K562 (cell line): ENCODE measurements at regions of chr7 and their contacts with region 1.

Region 1: GRCh38 chr7:38107486-38107893 is 70.6 kb upstream of the STARD3NL start:
- DNase-seq: peak; percentile 61 to 80 (median 67)
- ATAC-seq: peak; percentile 96
- H3K4me3 ChIP-seq: no peak overlapping the region
- H3K27ac ChIP-seq: no peak overlapping the region
- H3K4me1 ChIP-seq: no peaks in the 10 kb centered on the region
- H3K27me3 ChIP-seq: no peaks in the 10 kb centered on the region; a peak in 1 of 5 replicates
- CTCF ChIP-seq: peak; percentile 71 to 84 (median 81)
- EP300 ChIP-seq: no peak
- POLR2A ChIP-seq: no peak
- RAD21 ChIP-seq: peak; percentile 87 to 95

Region 2: GRCh38 chr7:38178004-38178694 is 70.7 kb after region 1 on chr7 and contains the start of gene STARD3NL:
- CTCF ChIA-PET with region 1: no interaction called
- POLR2A ChIA-PET with region 1: no interaction called
- in situ Hi-C with region 1: no loop called
- intact Hi-C with region 1: loop called (anchors 2 kb)
- DNase-seq: peak; percentile 96 to 100 (median 97)
- ATAC-seq: peak; percentile 94
- H3K4me3 ChIP-seq: peak within 1 kb of the TSS; percentile 68
- H3K27ac ChIP-seq: peak within 1 kb of the TSS; percentile 76
- H3K4me1 ChIP-seq: peaks cover 7 to 26% of the 10 kb centered on the region in 2 experiments
- H3K27me3 ChIP-seq: no peaks in the 10 kb centered on the region
- CTCF ChIP-seq: 0 out of 6 replicates have a peak, but pooled peaks of 1 of the 3 experiments have one; percentile 22
- EP300 ChIP-seq: no peak
- POLR2A ChIP-seq: peak; percentile 83
- RAD21 ChIP-seq: no peak
- polyA plus RNA-seq, gene STARD3NL: 79.6 to 90.0 TPM

Region 3: DNA sequence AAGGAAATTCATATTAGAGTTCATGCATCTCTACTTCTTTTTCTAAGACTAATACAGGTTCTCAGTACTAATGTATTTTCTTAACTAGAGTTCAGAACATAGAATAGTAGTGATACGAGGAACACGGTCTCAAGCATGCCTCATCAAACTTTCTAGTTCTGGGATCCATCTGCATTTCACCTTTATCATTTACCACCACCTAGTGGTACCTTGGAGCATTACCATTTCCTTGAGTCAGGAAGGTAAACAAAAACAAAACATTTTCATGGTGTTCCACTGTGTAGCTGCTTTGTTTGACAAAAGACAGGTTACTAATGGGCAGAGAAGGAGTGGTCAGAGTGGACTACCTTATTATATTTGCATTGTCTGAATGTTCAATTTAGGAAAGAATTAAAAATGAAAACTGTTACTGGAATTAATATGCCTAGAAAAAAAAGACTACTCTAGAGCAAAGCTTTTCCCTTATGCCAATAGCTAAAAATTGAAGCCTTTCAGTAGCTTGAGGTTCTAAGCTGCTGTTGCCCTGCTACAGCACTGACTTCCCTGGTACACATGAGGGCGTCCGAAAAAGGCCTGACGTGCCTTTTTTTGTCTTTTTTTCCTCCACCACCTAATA is 115.1 kb after region 1 on chr7:
- CTCF ChIA-PET with region 1: interaction called, 63 read pairs
- POLR2A ChIA-PET with region 1: no interaction called
- in situ Hi-C with region 1: loop called (anchors 5 kb)
- intact Hi-C with region 1: loop called (anchors 1 kb)
- DNase-seq: peak; percentile 54 to 73 (median 65)
- ATAC-seq: peak; percentile 88
- H3K4me3 ChIP-seq: no peak overlapping the region
- H3K27ac ChIP-seq: no peak overlapping the region
- H3K4me1 ChIP-seq: no peaks in the 10 kb centered on the region
- H3K27me3 ChIP-seq: no peaks in the 10 kb centered on the region
- CTCF ChIP-seq: peak; percentile 79 to 90 (median 82)
- EP300 ChIP-seq: no peak
- POLR2A ChIP-seq: no peak
- RAD21 ChIP-seq: peak; percentile 87 to 92

Region 4: DNA sequence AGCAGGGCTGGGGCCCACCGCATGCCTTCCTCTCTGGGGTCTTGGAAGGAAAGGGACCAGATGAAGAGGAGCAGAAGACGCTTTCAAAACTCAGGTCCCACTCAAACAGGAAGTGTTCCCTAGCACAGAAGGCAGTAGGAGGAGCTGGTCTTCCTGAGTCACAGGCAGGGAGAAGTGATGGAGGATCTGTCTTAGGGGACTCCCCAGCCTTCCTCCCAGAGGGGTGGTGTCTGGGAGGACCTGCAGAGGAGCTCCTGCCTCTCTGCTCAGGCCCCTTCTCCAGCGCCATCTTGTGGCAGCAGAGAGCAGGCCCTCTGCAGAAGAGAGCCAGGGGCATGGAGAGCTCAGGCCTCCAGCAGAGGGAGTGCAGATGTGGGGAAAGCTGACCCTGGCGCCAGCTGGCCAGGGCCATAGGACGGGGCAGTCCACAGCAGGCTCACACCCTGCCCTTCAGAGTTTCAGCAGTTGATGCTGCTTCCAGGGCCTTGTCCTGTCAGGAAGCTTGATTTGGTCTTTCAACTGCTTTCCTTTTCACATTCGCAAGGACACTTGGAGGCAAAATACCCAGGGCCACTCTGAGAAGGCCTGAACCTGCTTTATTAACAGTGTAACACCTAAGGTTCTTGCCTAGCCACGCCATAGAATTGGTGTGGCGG is 228.1 kb after region 1 on chr7:
- CTCF ChIA-PET with region 1: interaction called, 4 read pairs
- POLR2A ChIA-PET with region 1: no interaction called
- in situ Hi-C with region 1: loop called (anchors 10 kb)
- intact Hi-C with region 1: loop called (anchors 1 kb)
- DNase-seq: peak; percentile 85 to 97 (median 86)
- ATAC-seq: peak; percentile 94
- H3K4me3 ChIP-seq: peak overlapping the region; percentile 19
- H3K27ac ChIP-seq: peak overlapping the region; percentile 79
- H3K4me1 ChIP-seq: peaks cover 23 to 40% of the 10 kb centered on the region in 2 experiments
- H3K27me3 ChIP-seq: no peaks in the 10 kb centered on the region
- CTCF ChIP-seq: peak; percentile 100
- EP300 ChIP-seq: peak; percentile 59
- POLR2A ChIP-seq: peak; percentile 79
- RAD21 ChIP-seq: peak; percentile 92 to 93

Region 5: GRCh38 chr7:38716397-38716796 is 608.9 kb after region 1 on chr7:
- CTCF ChIA-PET with region 1: no interaction called
- POLR2A ChIA-PET with region 1: no interaction called
- in situ Hi-C with region 1: no loop called
- intact Hi-C with region 1: no loop called
- DNase-seq: peak in 2 of 4 experiments; percentile 21 to 29
- ATAC-seq: peak; percentile 75
- H3K4me3 ChIP-seq: no peak overlapping the region
- H3K27ac ChIP-seq: no peak overlapping the region
- H3K4me1 ChIP-seq: no peaks in the 10 kb centered on the region
- H3K27me3 ChIP-seq: 0 out of 5 replicates have a peak, but pooled peaks cover 0 to 4% of the 10 kb centered on the region in 2 experiments
- CTCF ChIP-seq: peak; percentile 27 to 37 (median 35); a peak in 2 of 6 replicates
- EP300 ChIP-seq: no peak
- POLR2A ChIP-seq: no peak
- RAD21 ChIP-seq: no peak